Activated naive CD8-positive, alpha-beta T cell treated with anti-CD3 and anti-CD28 coated beads, Interleukin-2, amount 10 ng/mL, durations not matched to agents 7 days and 5 days (primary cell): ENCODE measurements at regions of chr7 and their contacts with region 1.

Region 1: GRCh38 chr7:64562626-64563275 is at the start of gene ZNF680:
- DNase-seq: peak; percentile 84
- ATAC-seq: peak; percentile 99
- H3K4me3 Mint-ChIP-seq: peak within 1 kb of the TSS; percentile 99
- H3K27ac Mint-ChIP-seq: peak within 1 kb of the TSS; percentile 100
- H3K4me1 Mint-ChIP-seq: peaks cover 5% of the 10 kb centered on the region
- H3K27me3 Mint-ChIP-seq: no peaks in the 10 kb centered on the region
- total RNA-seq, gene ZNF680: 21.8 to 23.7 TPM

Region 2: DNA sequence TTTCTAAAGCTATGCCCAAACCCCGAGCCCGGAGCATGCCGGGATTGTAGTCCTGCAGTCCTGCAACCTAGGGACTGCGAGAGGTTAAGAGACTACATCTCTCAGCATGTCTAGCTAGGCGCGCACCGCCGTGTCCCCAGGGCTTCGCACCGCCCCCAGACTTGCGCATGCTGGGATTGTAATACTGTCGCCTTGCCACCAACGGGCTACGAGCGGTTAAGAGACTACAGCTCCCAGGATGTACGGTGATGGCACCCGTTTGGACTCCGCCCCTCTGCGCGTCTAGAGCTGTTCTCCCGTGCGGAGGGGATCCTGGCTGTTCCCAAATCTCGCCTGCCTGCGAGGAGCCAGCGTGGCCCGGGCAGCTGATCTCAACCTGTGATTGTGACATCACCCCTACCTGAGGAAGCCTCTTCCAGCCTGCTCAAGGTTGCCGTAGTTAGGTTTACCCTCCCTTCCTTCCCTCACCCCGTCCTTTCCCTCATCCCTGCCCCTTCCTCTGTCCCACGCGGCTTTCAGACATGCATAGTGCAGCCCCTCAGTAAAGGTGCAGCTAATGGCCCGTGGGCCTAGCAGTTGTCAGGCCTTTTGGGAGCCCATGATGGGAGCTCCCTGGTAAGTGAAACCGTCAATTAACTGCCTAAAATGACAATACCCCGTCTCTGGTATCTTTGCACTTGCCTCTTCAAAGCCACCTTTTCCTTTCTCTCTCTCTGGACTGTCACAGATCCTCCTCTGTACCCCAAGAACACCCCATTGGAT is 255.3 kb before region 1 on chr7:
- POLR2A ChIA-PET with region 1: interaction called, 24 read pairs
- DNase-seq: peak; percentile 87
- ATAC-seq: peak; percentile 100
- H3K4me3 Mint-ChIP-seq: peak overlapping the region; percentile 98
- H3K27ac Mint-ChIP-seq: peak overlapping the region; percentile 98
- H3K4me1 Mint-ChIP-seq: peaks cover 8% of the 10 kb centered on the region
- H3K27me3 Mint-ChIP-seq: no peaks in the 10 kb centered on the region

Region 3: DNA sequence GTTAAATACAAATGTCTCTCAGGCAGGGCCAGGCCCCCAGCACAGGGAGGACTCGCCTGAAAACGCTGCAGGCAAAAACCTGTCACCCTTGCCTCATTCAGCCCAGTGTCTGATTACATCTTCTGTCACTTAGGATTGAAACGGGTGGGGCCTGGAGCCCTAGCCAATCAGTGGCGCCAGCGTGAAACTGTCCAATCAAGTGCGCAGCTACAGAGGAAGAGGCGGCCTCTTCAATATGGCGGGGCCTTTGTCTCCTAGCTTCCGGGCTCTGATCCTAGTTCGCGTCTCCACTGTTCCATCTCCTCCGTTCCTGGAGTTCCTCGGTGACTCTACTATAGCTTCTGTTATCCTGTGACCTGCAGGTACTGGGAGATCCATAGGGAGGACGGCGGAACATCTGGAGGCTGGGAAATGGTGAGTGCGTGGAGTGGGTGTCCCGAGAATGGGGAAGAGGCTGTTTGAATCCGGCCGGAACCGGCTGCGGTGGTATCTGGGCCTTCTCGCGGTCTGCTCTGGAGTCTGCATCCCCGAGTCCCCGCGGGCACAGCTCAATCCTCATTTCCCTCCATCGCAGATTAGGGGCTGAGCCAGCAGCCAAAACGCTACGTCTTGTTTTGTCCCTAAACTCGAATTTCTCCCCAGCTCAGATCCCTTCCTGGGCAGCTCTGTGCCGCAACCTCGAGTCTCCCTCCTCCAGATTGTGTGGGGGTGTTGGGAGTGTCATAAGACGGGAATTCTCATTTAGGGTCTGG is 248.8 kb before region 1 on chr7 and contains the start of gene ZNF736:
- POLR2A ChIA-PET with region 1: interaction called, 19 read pairs
- DNase-seq: peak; percentile 80
- ATAC-seq: peak; percentile 100
- H3K4me3 Mint-ChIP-seq: peak within 1 kb of the TSS; percentile 99
- H3K27ac Mint-ChIP-seq: peak within 1 kb of the TSS; percentile 100
- H3K4me1 Mint-ChIP-seq: peaks cover 18% of the 10 kb centered on the region
- H3K27me3 Mint-ChIP-seq: no peaks in the 10 kb centered on the region
- total RNA-seq, gene ZNF736: 38.9 to 39.6 TPM

Region 4: GRCh38 chr7:64574540-64575126 is 11.9 kb after region 1 on chr7:
- POLR2A ChIA-PET with region 1: interaction called, 12 read pairs
- DNase-seq: no peak
- ATAC-seq: no peak
- H3K4me3 Mint-ChIP-seq: peak overlapping the region; percentile 19
- H3K27ac Mint-ChIP-seq: no peak overlapping the region
- H3K4me1 Mint-ChIP-seq: peaks cover 4% of the 10 kb centered on the region
- H3K27me3 Mint-ChIP-seq: peaks cover 7% of the 10 kb centered on the region